HEK293 (cell line): ENCODE measurements at regions of chr6 and their contacts with region 1.

Region 1: GRCh38 chr6:32838114-32838958 is at the start of gene TAP2:
- H3K4me3 ChIP-seq: peak within 1 kb of the TSS; percentile 87
- H3K27ac ChIP-seq: peak within 1 kb of the TSS; percentile 67
- H3K4me1 ChIP-seq: 0 out of 2 replicates have a peak, but pooled peaks cover 3% of the 10 kb centered on the region
- CTCF ChIP-seq: peak; percentile 96

Region 2: GRCh38 chr6:32589598-32590449 is 248.5 kb before region 1 on chr6 and contains the start of gene HLA-DRB1:
- CTCF ChIA-PET with region 1: no interaction called
- POLR2A ChIA-PET with region 1: no interaction called
- H3K4me3 ChIP-seq: no peak within 1 kb of the TSS
- H3K27ac ChIP-seq: no peak within 1 kb of the TSS
- H3K4me1 ChIP-seq: no peaks in the 10 kb centered on the region
- CTCF ChIP-seq: no peak

Region 3: GRCh38 chr6:32785781-32786533 is 52.4 kb before region 1 on chr6:
- CTCF ChIA-PET with region 1: interaction called, 10 read pairs
- POLR2A ChIA-PET with region 1: no interaction called
- H3K4me3 ChIP-seq: no peak overlapping the region
- H3K27ac ChIP-seq: no peak overlapping the region
- H3K4me1 ChIP-seq: no peaks in the 10 kb centered on the region
- CTCF ChIP-seq: peak; percentile 41; the same call in 1 of the 2 replicates

Region 4: GRCh38 chr6:32853541-32854375 is 15.4 kb after region 1 on chr6 and contains the starts of genes PSMB9 and TAP1:
- CTCF ChIA-PET with region 1: interaction called, 153 read pairs
- POLR2A ChIA-PET with region 1: interaction called, 30 read pairs
- H3K4me3 ChIP-seq: peak within 1 kb of the TSS; percentile 85
- H3K27ac ChIP-seq: peak within 1 kb of the TSS; percentile 71
- H3K4me1 ChIP-seq: no peaks in the 10 kb centered on the region; the same call in 1 of the 2 replicates
- CTCF ChIP-seq: peak; percentile 98

Region 5: DNA sequence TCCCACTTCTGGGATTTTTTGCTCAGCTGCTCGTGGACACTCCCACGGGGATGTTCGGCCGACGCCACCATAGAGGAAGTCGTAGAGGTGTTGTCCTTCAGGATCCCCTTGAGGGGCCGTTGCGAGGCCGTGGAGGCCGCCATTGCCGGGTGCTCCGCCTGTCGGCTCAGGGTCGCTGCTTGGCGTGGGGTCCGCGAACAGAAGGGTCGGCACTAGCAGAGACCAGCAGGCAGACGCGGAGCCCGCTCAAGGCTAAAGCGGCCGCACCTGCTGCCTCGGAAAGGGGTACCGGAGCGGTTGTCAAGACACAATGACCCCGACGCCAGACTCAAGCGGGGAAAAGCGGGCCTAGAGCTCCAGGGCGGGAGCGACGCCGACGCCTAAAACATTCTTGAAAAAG is 41.4 kb after region 1 on chr6:
- CTCF ChIA-PET with region 1: interaction called, 24 read pairs
- POLR2A ChIA-PET with region 1: no interaction called
- H3K4me3 ChIP-seq: no peak overlapping the region
- H3K27ac ChIP-seq: no peak overlapping the region
- H3K4me1 ChIP-seq: no peaks in the 10 kb centered on the region
- CTCF ChIP-seq: no peak

Region 6: GRCh38 chr6:32933636-32934085 is 95.3 kb after region 1 on chr6:
- CTCF ChIA-PET with region 1: interaction called, 12 read pairs
- POLR2A ChIA-PET with region 1: no interaction called
- H3K4me3 ChIP-seq: no peak overlapping the region
- H3K27ac ChIP-seq: no peak overlapping the region
- H3K4me1 ChIP-seq: no peaks in the 10 kb centered on the region
- CTCF ChIP-seq: peak; percentile 37; the same call in 1 of the 2 replicates

Region 7: GRCh38 chr6:32947552-32948465 is 109.5 kb after region 1 on chr6:
- CTCF ChIA-PET with region 1: interaction called, 22 read pairs
- POLR2A ChIA-PET with region 1: no interaction called
- H3K4me3 ChIP-seq: no peak overlapping the region
- H3K27ac ChIP-seq: no peak overlapping the region
- H3K4me1 ChIP-seq: no peaks in the 10 kb centered on the region
- CTCF ChIP-seq: peak; percentile 82

Region 8: GRCh38 chr6:33040157-33040556 is 201.8 kb after region 1 on chr6:
- CTCF ChIA-PET with region 1: no interaction called
- POLR2A ChIA-PET with region 1: no interaction called
- H3K4me3 ChIP-seq: no peak overlapping the region
- H3K27ac ChIP-seq: no peak overlapping the region
- H3K4me1 ChIP-seq: no peaks in the 10 kb centered on the region
- CTCF ChIP-seq: no peak

Region 9: GRCh38 chr6:33313709-33314514 is 475.6 kb after region 1 on chr6 and contains the start of gene TAPBP:
- CTCF ChIA-PET with region 1: no interaction called
- POLR2A ChIA-PET with region 1: no interaction called
- H3K4me3 ChIP-seq: peak within 1 kb of the TSS; percentile 61
- H3K27ac ChIP-seq: peak within 1 kb of the TSS; percentile 79
- H3K4me1 ChIP-seq: peaks cover 8% of the 10 kb centered on the region
- CTCF ChIP-seq: no peak